ENCODE measurements at regions of chr1 and their contacts with region 1.

Region 1: GRCh38 chr1:85339089-85339488 is 62.7 kb upstream of the BCL10 start:
- DNase-seq: no peak

Region 2: GRCh38 chr1:85313888-85314696 is 25.0 kb before region 1 on chr1:
- intact Hi-C with region 1: loop called (anchors 2 kb)
- DNase-seq: no peak

Measured in cardiac septum (tissue), 1 donor.